GM12878 (cell line): ENCODE measurements at regions of chr18 and their contacts with region 1.

Region 1: DNA sequence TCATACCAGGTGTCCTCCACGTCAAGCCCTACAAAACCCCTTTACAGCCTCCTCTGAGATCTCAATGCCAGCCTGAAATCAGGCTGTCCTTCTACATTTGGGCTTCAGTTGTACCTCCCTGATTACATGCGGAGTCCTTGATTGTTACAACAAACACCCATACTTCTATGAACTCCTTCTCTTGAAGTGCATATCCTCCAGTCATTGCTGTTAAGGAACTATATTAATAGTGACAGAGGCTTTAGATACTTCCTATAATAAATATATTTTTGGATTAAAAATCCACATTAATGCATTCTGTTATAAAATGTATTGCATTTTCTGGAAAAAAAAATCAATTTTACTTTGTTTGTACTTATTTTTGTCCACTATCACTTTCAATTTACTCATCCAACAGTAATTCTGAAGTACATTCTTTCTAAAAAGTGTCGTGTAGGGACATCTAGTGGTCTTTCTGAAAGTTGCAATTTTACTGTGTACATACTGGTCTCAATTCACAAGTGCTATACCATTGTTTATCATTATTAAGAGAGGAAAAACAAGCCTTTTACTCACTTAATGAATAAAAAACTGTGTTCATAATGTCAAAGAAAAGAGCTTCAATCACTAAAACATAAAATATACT is 316.4 kb downstream of the DSEL start:
- DNase-seq: peak; percentile 11
- ATAC-seq: peak; percentile 98
- H3K4me3 ChIP-seq: no peak overlapping the region
- H3K27ac ChIP-seq: no peak overlapping the region
- H3K4me1 ChIP-seq: no peaks in the 10 kb centered on the region
- H3K27me3 ChIP-seq: no peaks in the 10 kb centered on the region
- CTCF ChIP-seq: peak; percentile 50 to 67 (median 62); a peak in 5 of 6 replicates
- EP300 ChIP-seq: no peak
- POLR2A ChIP-seq: no peak
- RAD21 ChIP-seq: peak; percentile 66

Region 2: DNA sequence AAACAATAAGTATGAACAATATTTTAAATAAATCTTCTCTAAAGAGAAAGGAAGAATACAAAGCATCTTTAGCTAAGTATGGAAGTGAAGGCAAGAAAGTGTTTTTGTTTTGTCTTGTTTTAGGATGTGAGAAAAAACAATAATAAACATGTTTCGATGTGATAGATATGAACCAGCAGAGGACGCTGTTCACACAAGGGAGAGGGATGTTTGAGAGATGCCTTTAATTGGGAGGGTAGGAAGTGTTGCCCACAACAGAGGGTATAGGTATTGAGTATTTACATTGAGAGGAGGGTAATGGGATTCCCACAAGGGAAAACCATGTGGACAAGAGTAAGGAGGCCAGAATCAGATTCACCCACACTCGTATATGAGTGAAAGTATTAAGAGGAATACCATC is 651.4 kb before region 1 on chr18:
- CTCF ChIA-PET with region 1: no interaction called
- POLR2A ChIA-PET with region 1: no interaction called
- RAD21 ChIA-PET with region 1: no interaction called
- SMC1A ChIA-PET with region 1: interaction called, 3 read pairs
- in situ Hi-C with region 1: no loop called
- intact Hi-C with region 1: loop called (anchors 5 kb)
- DNase-seq: no peak
- ATAC-seq: peak; percentile 66; the same call in 2 of the 3 replicates
- H3K4me3 ChIP-seq: no peak overlapping the region
- H3K27ac ChIP-seq: no peak overlapping the region
- H3K4me1 ChIP-seq: no peaks in the 10 kb centered on the region
- H3K27me3 ChIP-seq: no peaks in the 10 kb centered on the region
- CTCF ChIP-seq: peak; percentile 27 to 51 (median 43); a peak in 4 of 6 replicates
- EP300 ChIP-seq: no peak
- POLR2A ChIP-seq: no peak
- RAD21 ChIP-seq: peak; percentile 29; the same call in 1 of the 2 replicates

Region 3: DNA sequence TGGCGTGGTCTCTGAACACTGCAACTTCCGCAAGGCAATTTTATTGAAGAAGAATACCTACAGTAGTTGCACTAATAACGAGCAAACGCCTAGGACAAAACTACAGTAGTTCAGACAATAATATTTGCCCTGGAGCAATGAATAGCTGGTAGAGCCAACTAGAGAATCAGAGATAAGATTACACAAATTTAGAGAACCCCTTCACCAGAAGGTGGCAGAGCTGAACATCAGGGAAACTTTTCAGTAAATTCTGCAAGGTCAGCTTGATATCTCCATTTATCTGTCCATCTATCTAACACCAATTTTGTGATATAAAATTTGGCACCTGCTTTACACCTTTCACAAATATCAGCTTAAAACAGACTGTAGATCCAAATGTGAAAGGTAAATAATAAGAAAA is 640.0 kb before region 1 on chr18:
- CTCF ChIA-PET with region 1: no interaction called
- POLR2A ChIA-PET with region 1: no interaction called
- RAD21 ChIA-PET with region 1: no interaction called
- SMC1A ChIA-PET with region 1: interaction called, 3 read pairs
- in situ Hi-C with region 1: no loop called
- intact Hi-C with region 1: loop called (anchors 5 kb)
- DNase-seq: no peak
- ATAC-seq: peak; percentile 53; the same call in 2 of the 3 replicates
- H3K4me3 ChIP-seq: no peak overlapping the region
- H3K27ac ChIP-seq: no peak overlapping the region
- H3K4me1 ChIP-seq: no peaks in the 10 kb centered on the region
- H3K27me3 ChIP-seq: no peaks in the 10 kb centered on the region
- CTCF ChIP-seq: peak; percentile 11 to 36 (median 34); a peak in 4 of 6 replicates
- EP300 ChIP-seq: no peak
- POLR2A ChIP-seq: no peak
- RAD21 ChIP-seq: no peak

Region 4: GRCh38 chr18:67104700-67105284 is 95.3 kb before region 1 on chr18:
- CTCF ChIA-PET with region 1: interaction called, 36 read pairs
- POLR2A ChIA-PET with region 1: no interaction called
- RAD21 ChIA-PET with region 1: interaction called, 6 read pairs
- SMC1A ChIA-PET with region 1: interaction called, 12 read pairs
- in situ Hi-C with region 1: loop called (anchors 5 kb)
- intact Hi-C with region 1: loop called (anchors 1 kb)
- DNase-seq: no peak
- ATAC-seq: peak; percentile 97
- H3K4me3 ChIP-seq: no peak overlapping the region
- H3K27ac ChIP-seq: no peak overlapping the region
- H3K4me1 ChIP-seq: no peaks in the 10 kb centered on the region
- H3K27me3 ChIP-seq: no peaks in the 10 kb centered on the region
- CTCF ChIP-seq: peak; percentile 61 to 79 (median 68)
- EP300 ChIP-seq: no peak
- POLR2A ChIP-seq: no peak
- RAD21 ChIP-seq: peak; percentile 58

Region 5: GRCh38 chr18:67232991-67233390 is 32.9 kb after region 1 on chr18:
- CTCF ChIA-PET with region 1: no interaction called
- POLR2A ChIA-PET with region 1: no interaction called
- RAD21 ChIA-PET with region 1: no interaction called
- SMC1A ChIA-PET with region 1: no interaction called
- in situ Hi-C with region 1: no loop called
- intact Hi-C with region 1: no loop called
- DNase-seq: no peak
- ATAC-seq: no peak
- H3K4me3 ChIP-seq: no peak overlapping the region
- H3K27ac ChIP-seq: no peak overlapping the region
- H3K4me1 ChIP-seq: no peaks in the 10 kb centered on the region
- H3K27me3 ChIP-seq: no peaks in the 10 kb centered on the region
- CTCF ChIP-seq: no peak
- EP300 ChIP-seq: no peak
- POLR2A ChIP-seq: no peak
- RAD21 ChIP-seq: no peak